Right cardiac atrium (tissue), 5 donors: ENCODE measurements at regions of chr15 and their contacts with region 1.

Region 1: DNA sequence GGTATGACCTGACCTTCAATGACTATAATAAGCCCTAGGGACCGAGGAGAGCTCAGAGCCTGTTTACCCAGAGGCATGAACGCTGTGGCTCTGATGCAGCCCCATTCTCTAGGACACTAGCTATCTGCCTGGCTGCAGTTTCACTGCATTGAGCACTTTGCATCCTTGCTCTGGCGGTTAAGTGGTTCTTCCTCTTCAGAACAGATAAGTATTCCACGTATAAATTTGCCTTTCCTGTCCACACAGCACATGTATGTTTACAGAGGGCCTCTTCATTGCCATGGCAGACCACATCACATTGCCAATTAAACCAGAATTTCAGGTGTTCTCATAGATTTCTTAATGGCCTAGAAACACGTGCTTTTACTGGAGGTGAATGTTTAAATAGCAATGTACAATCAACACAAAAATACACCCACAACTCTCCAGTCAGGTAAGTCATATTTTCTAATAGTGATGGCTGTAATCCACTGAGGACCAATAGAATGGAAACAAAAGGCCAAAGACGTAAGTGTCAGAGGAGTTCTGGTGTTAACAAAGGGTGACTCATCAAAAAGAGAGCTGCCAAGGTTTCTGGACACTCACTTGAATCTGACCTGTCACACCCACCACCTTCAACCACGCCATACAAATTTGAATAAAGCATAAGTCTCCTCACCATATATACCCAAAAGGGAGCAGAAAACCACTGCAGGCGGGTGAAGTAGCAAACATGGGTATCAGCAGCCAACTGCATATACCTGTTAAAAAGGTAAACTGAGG is 553.4 kb downstream of the OCA2 start:
- DNase-seq: no peak
- ATAC-seq: no peak
- H3K4me3 ChIP-seq: no peak overlapping the region
- H3K27ac ChIP-seq: no peak overlapping the region
- H3K4me1 ChIP-seq: no peaks in the 10 kb centered on the region
- H3K27me3 ChIP-seq: no peaks in the 10 kb centered on the region

Region 2: DNA sequence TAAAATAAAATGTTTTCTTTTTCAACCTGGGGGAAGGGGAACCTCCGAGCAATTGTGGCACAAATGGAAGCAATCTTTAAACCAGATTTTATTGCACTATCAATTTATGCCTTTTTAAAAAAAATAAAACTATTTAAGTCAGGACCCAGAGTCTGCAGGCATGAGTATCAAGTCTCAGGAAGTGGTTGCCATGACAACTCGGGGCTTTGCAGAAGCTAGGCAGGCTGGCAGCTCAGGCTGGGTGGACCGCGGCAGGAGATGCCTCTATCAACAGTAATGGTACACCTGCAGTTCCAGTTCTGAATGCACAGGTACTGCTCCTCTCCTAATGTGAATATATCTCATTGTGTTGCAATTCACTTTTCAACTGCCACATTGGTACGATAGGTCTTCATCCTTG is 126.9 kb before region 1 on chr15:
- intact Hi-C with region 1: no loop called
- DNase-seq: no peak
- ATAC-seq: no peak
- H3K4me3 ChIP-seq: no peak overlapping the region
- H3K27ac ChIP-seq: no peak overlapping the region
- H3K4me1 ChIP-seq: no peaks in the 10 kb centered on the region
- H3K27me3 ChIP-seq: peaks cover 2% of the 10 kb centered on the region

Region 3: DNA sequence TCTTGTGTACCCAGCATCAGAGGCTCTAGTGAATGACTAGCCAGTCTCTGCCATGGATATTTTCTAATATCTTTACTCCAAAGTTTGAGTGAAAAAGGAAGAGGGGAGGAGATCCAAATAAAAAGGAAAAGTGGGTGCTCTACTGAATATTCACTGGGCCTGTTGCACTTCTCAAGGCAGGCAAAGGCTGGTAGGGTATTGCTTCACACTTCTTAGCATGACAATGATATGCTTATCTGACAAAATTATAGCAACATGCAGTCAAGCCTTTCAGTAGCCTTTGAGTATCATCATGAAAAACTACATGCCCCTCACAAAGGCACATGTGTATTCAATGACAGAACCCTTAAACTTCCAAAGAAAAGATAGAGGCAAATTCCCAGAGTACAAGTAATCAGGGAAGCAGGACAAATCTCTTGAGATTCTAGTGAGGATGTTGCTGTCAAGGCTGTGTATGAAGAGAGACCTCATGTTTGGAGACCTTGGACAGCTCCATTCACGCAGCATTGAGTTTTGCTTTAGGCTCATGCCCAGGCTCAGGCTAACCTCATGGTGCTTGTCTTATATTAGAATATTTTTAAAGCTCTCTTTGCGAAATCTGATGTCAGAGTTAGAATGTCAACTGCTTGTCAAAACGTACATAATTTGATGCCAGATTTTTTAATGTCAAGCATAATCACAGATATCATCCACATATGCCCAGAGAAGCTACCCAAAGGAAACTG is 46.5 kb after region 1 on chr15:
- intact Hi-C with region 1: loop called in 1 of 4 experiments (anchors 10 kb)
- DNase-seq: no peak
- ATAC-seq: no peak
- H3K4me3 ChIP-seq: no peak overlapping the region
- H3K27ac ChIP-seq: no peak overlapping the region
- H3K4me1 ChIP-seq: no peaks in the 10 kb centered on the region
- H3K27me3 ChIP-seq: no peaks in the 10 kb centered on the region